HEK293 (cell line): ENCODE measurements at regions of chr2 and their contacts with region 1.

Region 1: DNA sequence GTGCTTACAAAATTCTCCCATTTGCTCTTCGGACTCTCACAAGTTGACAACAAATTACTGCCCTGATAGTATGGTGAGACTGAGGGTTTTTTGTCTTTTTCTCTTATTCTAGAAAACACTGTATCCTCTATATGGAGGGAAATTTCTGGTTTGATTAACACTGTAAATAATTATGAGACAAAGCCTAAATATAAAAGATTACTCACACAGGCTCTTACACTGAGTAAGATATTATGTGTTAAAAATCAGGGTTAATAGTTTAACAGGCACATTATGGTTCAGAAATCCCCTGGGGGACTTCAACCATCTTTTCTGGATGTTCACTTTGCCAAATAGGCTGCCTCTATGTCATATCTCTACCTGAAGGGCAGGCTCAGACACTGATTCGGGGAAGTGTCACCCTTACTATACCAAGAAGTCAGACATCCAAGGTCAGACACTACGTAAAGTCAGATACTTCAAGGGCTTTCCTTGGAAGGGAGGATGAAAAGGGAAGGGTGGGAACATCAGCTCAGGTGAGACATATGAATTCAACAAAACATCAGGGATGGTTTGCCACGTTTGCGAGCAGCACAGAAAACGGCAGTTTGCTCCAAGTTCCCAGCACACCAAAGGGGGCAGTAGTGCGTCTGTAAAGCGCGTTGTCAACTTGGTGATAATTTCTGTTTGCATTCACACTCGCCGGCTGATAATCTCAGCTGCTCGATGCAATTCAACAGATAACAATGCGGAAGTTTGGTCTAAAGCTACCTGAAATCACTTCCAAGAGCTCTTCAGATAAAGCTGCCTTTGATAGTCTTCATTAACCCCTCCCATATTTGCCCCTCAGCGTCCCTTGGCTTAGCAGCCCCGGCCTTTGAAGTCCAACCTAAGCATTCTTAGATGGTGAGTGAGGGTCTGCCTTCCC is 972 bp upstream of the RASGRP3 start:
- H3K4me3 ChIP-seq: peak overlapping the region; percentile 46
- H3K27ac ChIP-seq: peak overlapping the region; percentile 14
- H3K4me1 ChIP-seq: no peaks in the 10 kb centered on the region
- CTCF ChIP-seq: peak; percentile 60

Region 2: GRCh38 chr2:33494155-33494779 is 18.8 kb after region 1 on chr2:
- CTCF ChIA-PET with region 1: interaction called, 10 read pairs
- POLR2A ChIA-PET with region 1: no interaction called
- H3K4me3 ChIP-seq: no peak overlapping the region
- H3K27ac ChIP-seq: no peak overlapping the region
- H3K4me1 ChIP-seq: peaks cover 21% of the 10 kb centered on the region
- CTCF ChIP-seq: no peak

Region 3: GRCh38 chr2:33528441-33528950 is 53.0 kb after region 1 on chr2:
- CTCF ChIA-PET with region 1: no interaction called
- POLR2A ChIA-PET with region 1: no interaction called
- H3K4me3 ChIP-seq: no peak overlapping the region
- H3K27ac ChIP-seq: no peak overlapping the region
- H3K4me1 ChIP-seq: no peaks in the 10 kb centered on the region
- CTCF ChIP-seq: no peak

Region 4: DNA sequence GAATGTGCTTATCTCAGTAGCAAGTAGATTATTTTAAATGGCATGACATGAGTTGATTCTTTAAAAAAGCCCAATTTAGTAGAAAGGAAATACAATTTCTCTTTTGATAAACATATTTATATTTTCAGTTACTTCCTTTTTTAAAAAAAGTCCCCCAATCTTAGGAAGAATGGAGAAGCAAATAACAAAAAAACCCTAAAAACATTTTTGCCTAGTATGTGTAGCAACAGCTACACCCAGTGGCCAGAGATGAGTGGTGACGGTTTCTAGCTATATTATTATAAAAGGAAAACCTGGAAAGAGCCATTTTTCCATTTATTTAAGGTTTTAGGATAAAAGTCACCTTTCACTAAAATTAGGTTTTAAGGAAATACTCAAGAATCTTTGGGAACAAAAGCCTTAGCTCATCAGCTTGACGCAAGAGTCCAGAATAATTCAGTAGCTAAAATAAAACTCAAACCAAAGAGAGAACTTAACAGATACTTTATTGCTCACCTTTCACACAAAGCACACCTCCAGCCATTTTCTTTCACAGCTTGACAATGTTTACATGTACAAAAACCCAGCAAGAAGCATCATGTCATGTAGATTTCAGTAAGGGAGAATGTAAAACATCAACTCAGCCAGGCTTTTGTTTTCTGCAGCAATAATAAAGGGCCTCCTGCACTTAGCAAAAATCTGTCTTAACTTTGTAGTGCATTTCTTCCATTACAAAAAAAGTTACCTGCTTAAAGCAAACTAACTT is 107.9 kb after region 1 on chr2:
- CTCF ChIA-PET with region 1: interaction called, 11 read pairs
- POLR2A ChIA-PET with region 1: interaction called, 4 read pairs
- H3K4me3 ChIP-seq: no peak overlapping the region
- H3K27ac ChIP-seq: no peak overlapping the region
- H3K4me1 ChIP-seq: no peaks in the 10 kb centered on the region
- CTCF ChIP-seq: peak; percentile 31; the same call in 1 of the 2 replicates

Region 5: DNA sequence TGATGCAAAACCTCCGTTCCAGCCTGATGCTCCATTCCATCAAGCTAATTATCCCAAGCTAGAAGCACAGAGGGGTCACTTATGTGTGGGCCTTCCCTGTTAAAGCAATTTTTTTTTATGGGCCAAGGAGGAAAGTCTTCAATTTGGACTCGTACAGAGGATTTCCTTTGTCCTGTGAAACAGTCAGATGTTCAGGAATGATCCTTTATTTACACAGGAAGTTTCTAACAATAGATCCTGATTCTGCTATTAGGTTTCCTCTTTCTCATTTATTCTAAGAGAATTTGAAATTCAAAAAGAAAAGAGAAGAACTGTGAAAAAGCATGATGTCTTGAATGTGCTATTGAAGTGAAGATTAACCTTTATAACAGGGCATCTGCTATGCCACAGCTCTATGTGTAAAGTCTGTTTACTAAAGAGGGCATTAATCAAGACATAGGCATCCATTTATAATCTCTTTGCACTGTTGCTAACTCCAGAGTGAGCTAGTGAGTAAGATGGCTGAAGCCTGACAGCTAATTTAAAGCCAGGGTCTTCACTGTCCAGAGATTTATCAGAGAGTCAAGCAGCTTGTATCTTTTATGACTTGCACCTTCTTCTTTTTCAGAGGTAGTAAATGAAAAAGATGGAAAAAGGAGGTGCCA is 229.0 kb after region 1 on chr2:
- CTCF ChIA-PET with region 1: no interaction called
- POLR2A ChIA-PET with region 1: no interaction called
- H3K4me3 ChIP-seq: no peak overlapping the region
- H3K27ac ChIP-seq: no peak overlapping the region
- H3K4me1 ChIP-seq: no peaks in the 10 kb centered on the region
- CTCF ChIP-seq: no peak